Aorta (tissue), 5 donors: ENCODE measurements at regions of chr19 and their contacts with region 1.

Region 1: GRCh38 chr19:1355568-1356507 is 27.9 kb upstream of the NDUFS7 start:
- DNase-seq: no peak
- ATAC-seq: no peak
- H3K4me3 ChIP-seq: peak overlapping the region; percentile 75 to 89
- H3K27ac ChIP-seq: peak overlapping the region in 1 of 2 donors; percentile 0
- H3K4me1 ChIP-seq: no peaks in the 10 kb centered on the region
- H3K27me3 ChIP-seq: no peaks in the 10 kb centered on the region

Region 2: DNA sequence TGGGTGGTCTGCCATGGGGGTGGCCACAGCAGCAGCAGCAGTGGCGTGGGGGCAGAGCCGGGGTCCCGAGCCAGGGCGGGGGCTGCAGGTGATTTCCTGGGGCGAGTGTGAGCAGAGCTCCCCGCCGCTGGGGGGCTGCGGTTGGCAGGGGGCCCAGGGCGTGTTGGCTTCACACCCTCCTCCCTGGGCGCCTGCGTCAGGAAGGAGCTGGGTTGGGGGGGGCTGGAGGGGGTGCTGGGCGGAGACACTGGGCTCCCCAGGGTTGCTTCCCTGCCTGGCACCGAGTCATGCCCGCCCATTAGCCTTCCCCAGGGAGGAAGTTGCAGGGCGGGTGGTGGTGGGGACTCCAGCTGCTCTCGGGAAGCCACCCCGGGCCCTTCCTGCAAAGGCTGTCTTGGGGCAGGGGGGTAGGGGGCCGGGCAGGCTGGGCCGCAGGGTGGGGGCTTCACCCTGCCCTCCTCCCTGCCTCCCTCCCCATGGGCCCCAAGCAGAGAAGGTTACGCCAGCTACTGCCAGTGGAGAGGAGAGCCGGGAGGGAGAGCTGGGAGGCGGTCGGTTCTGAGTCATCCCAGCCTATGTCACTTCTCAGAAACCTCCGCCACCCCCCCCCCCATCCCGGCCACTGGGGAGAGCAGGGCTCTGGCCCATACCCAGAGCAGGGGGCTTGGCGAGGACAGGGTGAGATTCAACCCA is 102.9 kb before region 1 on chr19:
- intact Hi-C with region 1: no loop called
- DNase-seq: peak; percentile 96 to 97
- ATAC-seq: peak; percentile 70
- H3K4me3 ChIP-seq: peak overlapping the region in 1 of 2 donors; percentile 21
- H3K27ac ChIP-seq: peak overlapping the region; percentile 76 to 97
- H3K4me1 ChIP-seq: no peaks in the 10 kb centered on the region
- H3K27me3 ChIP-seq: peaks cover 0 to 2% of the 10 kb centered on the region in 2 donors

Region 3: DNA sequence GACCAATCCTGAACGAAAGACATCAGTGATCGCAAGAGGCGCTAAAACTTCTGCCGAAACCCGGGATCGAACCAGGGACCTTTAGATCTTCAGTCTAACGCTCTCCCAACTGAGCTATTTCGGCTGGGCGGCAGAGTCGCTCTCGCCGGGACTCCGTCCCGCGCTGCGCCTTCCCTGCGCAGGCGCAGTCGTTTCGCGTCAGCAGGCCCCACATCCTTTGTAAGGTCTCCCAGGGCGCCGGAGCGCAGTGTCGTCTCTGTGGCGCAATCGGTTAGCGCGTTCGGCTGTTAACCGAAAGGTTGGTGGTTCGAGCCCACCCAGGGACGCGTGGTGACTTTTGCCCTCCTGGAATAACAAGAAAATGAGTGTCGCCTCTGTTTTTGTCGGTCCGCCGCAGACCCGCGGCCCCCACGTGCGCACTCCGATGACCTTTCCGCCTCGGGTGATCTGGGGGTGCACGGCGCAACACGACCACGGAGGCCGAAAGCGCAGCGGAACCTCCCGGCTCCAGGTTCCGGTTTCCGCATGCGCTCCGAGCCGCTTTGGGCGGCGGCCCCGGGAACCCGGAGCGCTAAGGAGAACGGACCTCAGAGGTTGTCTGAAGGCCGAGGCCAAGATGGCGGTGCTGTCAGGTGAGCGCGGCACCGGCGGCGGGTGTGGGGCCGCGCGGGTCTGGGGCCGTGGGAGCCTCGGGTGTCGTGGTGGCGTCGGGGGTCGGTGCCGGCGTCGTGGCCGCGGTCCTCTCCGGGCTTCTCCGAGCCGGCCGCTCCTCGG is 27.7 kb after region 1 on chr19 and contains the start of gene NDUFS7:
- intact Hi-C with region 1: loop called in 1 of 2 experiments (anchors 2 kb)
- DNase-seq: peak; percentile 94 to 95
- ATAC-seq: peak; percentile 95
- H3K4me3 ChIP-seq: peak within 1 kb of the TSS; percentile 50 to 77
- H3K27ac ChIP-seq: no peak within 1 kb of the TSS
- H3K4me1 ChIP-seq: peaks cover 0 to 3% of the 10 kb centered on the region in 2 donors
- H3K27me3 ChIP-seq: no peaks in the 10 kb centered on the region
- total RNA-seq, gene NDUFS7: 47.7 to 47.8 TPM

Region 4: DNA sequence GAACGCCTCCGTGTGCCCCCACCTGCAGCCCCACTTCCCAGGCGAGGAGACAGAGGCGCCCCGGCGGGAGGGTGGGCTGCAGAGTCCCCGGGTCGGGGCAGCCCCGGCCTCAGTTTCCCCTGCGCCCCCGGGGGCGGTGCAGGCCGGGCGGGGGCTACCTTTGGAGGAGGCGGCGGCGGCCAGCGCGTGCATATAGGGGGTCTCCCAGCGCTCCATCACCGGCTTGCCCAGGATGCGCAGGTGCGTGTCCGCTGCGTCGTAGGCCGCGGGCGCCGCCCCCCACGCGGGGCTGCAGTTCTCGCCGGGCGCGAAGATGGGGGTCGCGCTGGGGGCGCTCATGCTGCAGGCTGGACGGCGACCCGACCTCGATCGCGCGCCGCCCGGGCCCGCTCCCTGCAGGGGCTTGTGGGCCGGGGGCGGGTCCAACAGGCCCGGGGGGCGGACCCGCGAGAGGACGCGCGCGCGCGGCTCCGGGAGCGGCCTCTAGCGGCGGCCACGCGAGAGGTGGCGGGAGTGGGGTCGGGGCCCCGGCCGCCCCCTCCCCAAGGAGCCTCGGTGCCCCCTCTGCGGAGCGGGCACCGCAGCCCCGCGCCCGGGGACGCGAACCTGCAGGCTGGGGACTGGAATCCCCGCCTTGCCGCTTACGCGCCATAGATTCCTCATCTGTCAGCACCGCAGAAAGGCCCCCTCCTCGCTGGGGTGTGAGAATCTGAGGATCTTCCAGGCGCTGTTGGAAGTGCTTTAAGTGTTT is 45.5 kb after region 1 on chr19 and contains the start of gene GAMT:
- intact Hi-C with region 1: no loop called
- DNase-seq: no peak
- ATAC-seq: peak; percentile 70
- H3K4me3 ChIP-seq: peak within 1 kb of the TSS; percentile 46 to 58
- H3K27ac ChIP-seq: no peak within 1 kb of the TSS
- H3K4me1 ChIP-seq: no peaks in the 10 kb centered on the region
- H3K27me3 ChIP-seq: no peaks in the 10 kb centered on the region
- total RNA-seq, gene GAMT: 7.9 to 16.1 TPM

Region 5: GRCh38 chr19:1411255-1412191 is 55.7 kb after region 1 on chr19:
- intact Hi-C with region 1: loop called in 1 of 2 experiments (anchors 5 kb)
- DNase-seq: peak in 1 of 2 donors; percentile 70
- ATAC-seq: no peak
- H3K4me3 ChIP-seq: no peak overlapping the region
- H3K27ac ChIP-seq: no peak overlapping the region
- H3K4me1 ChIP-seq: no peaks in the 10 kb centered on the region
- H3K27me3 ChIP-seq: no peaks in the 10 kb centered on the region